Right ventricle myocardium inferior (tissue), 1 donor: ENCODE measurements at regions of chr7 and their contacts with region 1.

Region 1: DNA sequence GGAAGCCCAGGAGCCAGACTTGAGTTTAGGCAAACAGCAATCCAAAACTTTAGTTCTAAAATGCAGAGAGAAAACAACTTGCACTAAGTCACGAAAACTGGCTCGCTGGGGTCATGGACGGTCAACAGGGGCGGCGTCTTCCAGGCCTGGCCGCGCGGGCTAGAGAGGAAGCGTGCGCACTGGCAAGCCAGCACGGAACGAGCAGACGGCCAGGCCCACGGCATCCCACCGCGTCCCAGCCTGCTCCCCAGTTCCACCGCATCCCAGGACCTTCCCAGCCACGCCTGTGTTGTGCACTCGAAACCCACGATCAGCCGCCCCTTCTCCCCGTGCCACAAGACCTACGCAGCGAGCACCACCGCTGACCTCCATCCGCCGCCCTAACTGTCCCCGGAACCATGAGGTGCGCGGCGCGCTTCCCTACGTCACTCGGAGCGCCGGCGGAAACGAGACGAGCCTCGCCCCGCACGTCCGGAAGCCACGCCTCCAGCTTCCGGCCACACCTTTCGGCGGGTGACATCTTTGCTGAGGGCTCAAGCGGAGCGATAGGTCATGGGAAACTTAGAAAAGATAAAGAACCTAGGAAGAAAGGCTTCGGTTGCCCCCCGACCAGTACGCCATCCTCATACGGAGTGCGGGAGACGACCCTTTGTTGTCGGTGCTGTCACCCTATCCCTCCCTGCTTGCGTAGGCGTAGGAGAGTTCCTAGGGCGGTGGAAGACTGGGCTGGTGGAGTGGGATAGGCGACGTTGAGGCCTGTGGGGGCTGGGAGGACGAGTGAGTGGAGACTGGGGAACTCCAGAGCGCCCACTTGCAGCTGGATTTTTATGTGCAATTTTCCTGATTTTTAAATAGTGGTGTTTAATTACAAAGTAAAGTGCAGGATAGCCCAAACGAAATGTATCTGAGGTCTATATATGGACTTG is at the start of gene TBRG4:
- DNase-seq: peak; percentile 97
- ATAC-seq: peak; percentile 99
- total RNA-seq, gene TBRG4: 82.4 TPM

Region 2: GRCh38 chr7:44573464-44574286 is 537.9 kb before region 1 on chr7 and contains the start of gene DDX56:
- intact Hi-C with region 1: loop called (anchors 10 kb)
- DNase-seq: peak; percentile 98
- ATAC-seq: peak; percentile 98
- total RNA-seq, gene DDX56: 29.6 TPM

Region 3: GRCh38 chr7:44885394-44886317 is 225.9 kb before region 1 on chr7 and contains the start of gene PURB:
- intact Hi-C with region 1: loop called (anchors 5 kb)
- DNase-seq: peak; percentile 98
- ATAC-seq: peak; percentile 98
- total RNA-seq, gene PURB: 13.8 TPM

Region 4: GRCh38 chr7:44986218-44987053 is 125.1 kb before region 1 on chr7:
- intact Hi-C with region 1: loop called (anchors 5 kb)
- DNase-seq: peak; percentile 98
- ATAC-seq: peak; percentile 99

Region 5: GRCh38 chr7:44999245-45000095 is 112.1 kb before region 1 on chr7:
- intact Hi-C with region 1: loop called (anchors 1 kb)
- DNase-seq: peak; percentile 100
- ATAC-seq: peak; percentile 97

Region 6: DNA sequence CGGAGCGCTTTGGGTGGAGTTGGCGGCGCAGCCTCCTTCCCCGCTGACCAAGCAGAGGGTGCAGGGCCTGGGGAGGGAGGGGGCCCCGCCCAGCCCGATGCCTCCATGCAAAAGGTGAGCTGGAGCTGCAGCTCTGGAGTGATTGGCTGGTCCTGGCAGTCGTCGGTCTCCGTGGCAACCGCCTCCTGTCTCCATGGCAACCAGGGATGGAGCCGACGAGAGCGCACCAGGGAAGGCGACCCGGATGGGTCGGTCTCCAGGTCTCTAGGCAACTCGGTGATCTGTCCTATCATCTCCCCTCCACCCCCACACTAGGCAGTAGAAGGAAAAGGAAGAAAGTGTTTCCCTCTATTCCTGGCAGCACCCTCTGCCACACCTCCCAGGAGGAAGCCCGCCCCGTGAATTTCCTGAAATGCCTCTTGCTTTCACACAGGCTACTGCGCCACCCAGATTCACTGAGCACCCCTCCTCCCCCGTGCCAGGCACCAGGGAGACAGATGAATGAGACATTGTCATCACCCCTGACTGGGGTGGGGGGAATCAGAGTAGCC is 22.1 kb before region 1 on chr7:
- intact Hi-C with region 1: no loop called
- DNase-seq: no peak
- ATAC-seq: peak; percentile 32